Psoas muscle (tissue), 8 donors: ENCODE measurements at regions of chr14 and their contacts with region 1.

Region 1: GRCh38 chr14:34496679-34497513 is 34.9 kb upstream of the SPTSSA start:
- DNase-seq: peak; percentile 85 to 90
- ATAC-seq: peak; percentile 95 to 97 (median 96)
- H3K4me3 ChIP-seq: peak overlapping the region; percentile 41
- H3K27ac ChIP-seq: peak overlapping the region; percentile 82
- H3K4me1 ChIP-seq: peaks cover 15% of the 10 kb centered on the region
- H3K27me3 ChIP-seq: no peaks in the 10 kb centered on the region
- CTCF ChIP-seq: peak; percentile 18

Region 2: DNA sequence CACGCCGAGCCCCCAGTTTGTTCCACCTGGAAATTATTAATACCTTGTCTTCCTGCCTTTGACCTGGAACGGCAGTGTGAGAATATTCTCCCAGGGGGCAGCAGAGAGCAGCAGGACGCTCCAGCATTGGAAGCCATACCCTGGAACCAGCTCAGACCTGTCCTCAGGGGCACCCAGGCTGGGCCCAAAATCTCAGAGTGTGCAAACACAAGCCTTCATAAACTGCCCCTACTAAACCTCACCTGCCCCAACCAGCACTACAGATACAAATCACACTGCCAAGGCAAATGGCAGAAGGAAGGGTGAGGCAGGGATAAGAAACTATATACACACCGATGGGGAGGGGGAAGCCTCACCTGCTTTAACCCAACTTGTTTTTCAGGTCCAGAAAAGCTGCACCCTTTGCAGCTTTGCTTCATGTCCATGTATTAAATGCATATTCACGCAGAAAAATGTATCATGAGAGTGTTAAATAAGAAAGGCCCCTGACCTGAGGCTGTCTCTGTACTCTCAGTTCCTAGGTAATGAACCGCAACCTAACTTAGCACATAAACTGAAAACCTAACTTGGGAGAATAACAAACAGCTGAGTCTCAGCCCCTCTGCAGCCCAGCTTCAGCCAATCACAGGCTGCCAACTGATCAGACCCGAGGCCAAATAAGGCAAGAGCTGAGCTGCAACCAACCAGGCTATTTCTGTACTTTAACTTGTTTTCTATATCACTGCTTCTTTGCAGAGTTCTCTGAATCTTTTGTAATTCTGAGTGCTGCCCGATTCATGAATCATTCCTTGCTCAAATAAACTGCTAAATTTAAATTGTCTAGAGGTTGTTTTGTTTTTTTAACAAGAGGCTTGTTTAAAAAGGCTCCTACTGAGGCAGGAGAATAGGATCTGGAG is 164.9 kb before region 1 on chr14:
- intact Hi-C with region 1: loop called (anchors 2 to 10 kb)
- DNase-seq: peak; percentile 59 to 66
- ATAC-seq: peak; percentile 71 to 95 (median 92)
- H3K4me3 ChIP-seq: no peak overlapping the region
- H3K27ac ChIP-seq: no peak overlapping the region
- H3K4me1 ChIP-seq: no peaks in the 10 kb centered on the region
- H3K27me3 ChIP-seq: no peaks in the 10 kb centered on the region
- CTCF ChIP-seq: peak; percentile 76

Region 3: GRCh38 chr14:34355584-34356263 is 141.2 kb before region 1 on chr14:
- intact Hi-C with region 1: no loop called
- DNase-seq: no peak
- ATAC-seq: peak in 2 of 4 donors; percentile 23 to 52
- H3K4me3 ChIP-seq: no peak overlapping the region
- H3K27ac ChIP-seq: no peak overlapping the region
- H3K4me1 ChIP-seq: no peaks in the 10 kb centered on the region
- H3K27me3 ChIP-seq: no peaks in the 10 kb centered on the region
- CTCF ChIP-seq: no peak

Region 4: GRCh38 chr14:34461334-34462131 is 35.4 kb before region 1 on chr14:
- intact Hi-C with region 1: no loop called
- DNase-seq: peak; percentile 55 to 70
- ATAC-seq: peak; percentile 54 to 69 (median 60)
- H3K4me3 ChIP-seq: peak overlapping the region; percentile 80
- H3K27ac ChIP-seq: peak overlapping the region; percentile 93
- H3K4me1 ChIP-seq: peaks cover 18% of the 10 kb centered on the region
- H3K27me3 ChIP-seq: no peaks in the 10 kb centered on the region
- CTCF ChIP-seq: no peak